Mammary epithelial cell (primary cell): ENCODE measurements at regions of chr7 and their contacts with region 1.

Region 1: GRCh38 chr7:39465055-39465929 is 100.9 kb upstream of the YAE1 start:
- DNase-seq: peak; percentile 39
- H3K4me3 ChIP-seq: no peak overlapping the region
- H3K27ac ChIP-seq: no peak overlapping the region
- H3K4me1 ChIP-seq: no peaks in the 10 kb centered on the region
- H3K27me3 ChIP-seq: peaks cover 3% of the 10 kb centered on the region
- CTCF ChIP-seq: peak; percentile 78 to 82

Region 2: DNA sequence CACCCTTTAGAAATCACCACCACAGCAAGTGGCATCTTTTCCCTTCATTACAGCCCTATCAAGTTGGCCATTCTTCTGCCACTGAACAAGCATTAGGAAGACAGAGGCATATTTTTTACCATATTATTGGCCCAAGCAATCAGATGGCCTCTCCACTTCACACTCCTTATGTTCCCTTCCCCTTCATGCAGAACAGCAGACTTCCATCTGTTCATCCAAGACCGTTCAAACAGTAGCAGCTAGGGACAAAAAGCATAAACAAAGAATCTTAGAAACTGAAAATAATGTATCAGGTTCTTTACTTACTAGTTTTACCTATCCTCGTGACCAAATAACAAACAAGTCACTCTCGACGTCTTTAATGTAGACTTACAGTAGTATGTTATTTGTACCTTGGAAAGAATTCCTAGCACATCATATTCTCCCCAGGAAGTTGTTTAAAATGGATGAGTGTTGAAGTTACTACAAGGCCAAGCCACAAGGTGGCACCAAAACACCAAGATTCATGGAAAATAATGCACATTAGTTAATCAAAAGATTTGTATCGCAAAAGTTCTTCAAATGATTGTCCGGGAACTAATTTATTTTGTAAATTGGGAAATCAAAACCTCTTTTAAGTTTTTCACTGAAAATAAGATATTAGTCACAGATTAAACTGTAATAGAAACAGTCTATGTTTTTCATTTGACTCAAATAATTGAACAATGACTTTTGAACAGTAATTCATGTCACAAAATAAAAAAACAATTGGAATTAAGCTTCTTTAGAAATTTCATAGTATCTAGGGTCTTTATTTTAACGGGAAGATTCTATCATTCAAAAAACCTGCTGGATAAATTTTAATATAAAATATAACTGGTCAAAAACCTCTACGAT is 668.4 kb before region 1 on chr7:
- CTCF ChIA-PET with region 1: no interaction called
- dilution Hi-C with region 1: no loop called
- in situ Hi-C with region 1: loop called (anchors 10 kb)
- intact Hi-C with region 1: loop called (anchors 1 kb)
- DNase-seq: peak; percentile 39
- H3K4me3 ChIP-seq: no peak overlapping the region
- H3K27ac ChIP-seq: no peak overlapping the region
- H3K4me1 ChIP-seq: peaks cover 12% of the 10 kb centered on the region
- H3K27me3 ChIP-seq: no peaks in the 10 kb centered on the region
- CTCF ChIP-seq: peak; percentile 68 to 71

Region 3: DNA sequence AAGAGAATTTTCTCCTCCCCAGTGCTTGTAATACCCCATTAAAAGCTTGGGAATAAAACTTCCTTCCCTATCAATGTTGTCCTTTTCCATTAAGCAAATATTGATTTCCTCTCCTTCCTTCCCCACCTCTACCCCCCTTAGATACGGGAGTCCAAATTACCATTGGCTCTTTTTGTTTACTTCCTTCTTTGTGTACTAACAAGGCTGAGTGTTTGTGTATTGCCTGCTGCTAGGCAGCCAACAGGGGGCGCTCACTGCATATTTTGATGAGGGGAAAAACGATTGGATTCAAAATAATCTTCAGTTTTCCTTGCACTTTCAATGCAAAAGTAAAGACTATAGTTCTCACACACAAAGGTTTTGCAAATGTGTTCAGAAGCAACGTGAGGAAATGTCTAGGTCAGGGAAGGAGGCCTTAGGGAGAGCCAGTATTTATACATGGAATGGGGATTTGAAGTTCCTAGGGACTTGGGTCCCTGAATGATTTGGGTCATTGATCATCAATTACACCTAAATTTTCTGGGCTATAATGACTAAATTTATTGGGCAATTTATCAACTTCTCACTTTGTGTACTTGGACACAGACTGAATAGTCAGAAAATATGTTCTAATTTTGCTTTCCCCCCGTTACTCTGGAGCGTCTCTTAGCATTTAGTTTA is 532.7 kb before region 1 on chr7:
- CTCF ChIA-PET with region 1: no interaction called
- dilution Hi-C with region 1: no loop called
- in situ Hi-C with region 1: loop called in 1 of 2 experiments (anchors 25 kb)
- intact Hi-C with region 1: loop called (anchors 1 kb)
- DNase-seq: peak; percentile 16
- H3K4me3 ChIP-seq: no peak overlapping the region
- H3K27ac ChIP-seq: no peak overlapping the region
- H3K4me1 ChIP-seq: no peaks in the 10 kb centered on the region
- H3K27me3 ChIP-seq: no peaks in the 10 kb centered on the region
- CTCF ChIP-seq: peak; percentile 96 to 97

Region 4: GRCh38 chr7:38942431-38943051 is 522.8 kb before region 1 on chr7:
- CTCF ChIA-PET with region 1: no interaction called
- dilution Hi-C with region 1: no loop called
- in situ Hi-C with region 1: loop called (anchors 10 to 25 kb)
- intact Hi-C with region 1: no loop called
- DNase-seq: no peak
- H3K4me3 ChIP-seq: no peak overlapping the region
- H3K27ac ChIP-seq: no peak overlapping the region
- H3K4me1 ChIP-seq: no peaks in the 10 kb centered on the region
- H3K27me3 ChIP-seq: no peaks in the 10 kb centered on the region
- CTCF ChIP-seq: no peak

Region 5: GRCh38 chr7:39075210-39075609 is 390.1 kb before region 1 on chr7:
- CTCF ChIA-PET with region 1: interaction called, 4 read pairs
- dilution Hi-C with region 1: no loop called
- in situ Hi-C with region 1: no loop called
- intact Hi-C with region 1: loop called (anchors 1 kb)
- DNase-seq: no peak
- H3K4me3 ChIP-seq: no peak overlapping the region
- H3K27ac ChIP-seq: no peak overlapping the region
- H3K4me1 ChIP-seq: no peaks in the 10 kb centered on the region
- H3K27me3 ChIP-seq: no peaks in the 10 kb centered on the region
- CTCF ChIP-seq: peak in 1 of 2 donors; percentile 8

Region 6: DNA sequence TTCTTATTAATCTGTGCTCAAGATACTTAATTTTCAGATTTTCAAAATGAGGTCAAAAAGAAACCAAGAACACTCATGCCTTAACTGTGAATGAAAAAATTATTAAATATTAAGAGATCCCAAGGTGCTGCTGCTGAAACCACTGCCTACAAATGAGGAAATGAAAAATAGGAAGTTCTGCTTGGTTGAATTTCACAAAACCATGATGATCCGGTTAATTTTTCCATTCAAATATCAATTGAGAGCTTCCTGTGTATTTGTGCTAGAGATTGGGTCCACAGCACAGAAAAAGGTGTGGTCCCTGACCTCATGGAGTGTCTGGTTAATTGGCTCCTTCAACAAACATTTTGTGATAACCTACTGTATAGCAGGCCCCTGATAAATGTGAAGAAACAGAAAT is 31.7 kb before region 1 on chr7:
- CTCF ChIA-PET with region 1: no interaction called
- dilution Hi-C with region 1: no loop called
- in situ Hi-C with region 1: no loop called
- intact Hi-C with region 1: no loop called
- DNase-seq: no peak
- H3K4me3 ChIP-seq: no peak overlapping the region
- H3K27ac ChIP-seq: no peak overlapping the region
- H3K4me1 ChIP-seq: peaks cover under 1% of the 10 kb centered on the region
- H3K27me3 ChIP-seq: peaks cover 5% of the 10 kb centered on the region
- CTCF ChIP-seq: no peak

Region 7: DNA sequence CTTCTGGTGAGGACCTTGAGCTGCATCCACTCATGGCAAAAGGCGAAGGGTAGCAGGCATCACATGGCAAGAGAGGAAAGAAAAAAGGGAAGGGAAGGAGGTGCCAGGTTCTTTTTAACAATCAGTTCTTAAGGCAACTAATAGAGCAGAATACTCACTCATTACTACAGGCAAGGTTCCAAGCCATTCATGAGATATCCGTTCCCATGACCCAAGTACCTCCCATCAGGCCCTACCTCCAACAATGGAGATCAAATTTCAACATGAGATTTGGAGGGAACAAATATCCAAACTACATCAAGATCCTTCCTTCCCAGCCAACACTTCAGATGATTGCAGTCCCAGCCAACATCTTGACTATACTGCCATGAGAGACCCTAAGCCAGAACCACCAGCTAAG is 62.0 kb after region 1 on chr7:
- CTCF ChIA-PET with region 1: no interaction called
- dilution Hi-C with region 1: no loop called
- in situ Hi-C with region 1: no loop called
- intact Hi-C with region 1: no loop called
- DNase-seq: no peak
- H3K4me3 ChIP-seq: no peak overlapping the region
- H3K27ac ChIP-seq: no peak overlapping the region
- H3K4me1 ChIP-seq: no peaks in the 10 kb centered on the region
- H3K27me3 ChIP-seq: no peaks in the 10 kb centered on the region
- CTCF ChIP-seq: no peak

Region 8: DNA sequence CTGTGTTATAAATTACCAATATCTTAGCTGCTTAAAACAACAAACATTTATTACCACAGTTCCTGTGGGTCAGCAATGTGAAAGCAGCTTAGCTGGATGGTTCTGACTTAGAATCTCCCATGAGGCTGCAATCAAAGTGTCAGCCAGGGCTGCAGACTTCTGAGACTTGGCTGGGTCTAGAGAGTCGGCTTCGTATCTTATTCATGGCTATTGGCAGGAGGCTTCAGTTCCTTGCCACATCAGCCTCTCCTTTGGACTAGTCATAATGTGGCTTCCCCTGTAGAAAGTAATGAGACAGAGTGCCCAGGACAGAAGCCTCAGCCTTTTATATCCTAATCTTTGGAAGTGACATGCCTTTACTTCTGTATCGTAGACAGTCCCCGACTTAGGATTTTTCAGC is 185.4 kb after region 1 on chr7:
- CTCF ChIA-PET with region 1: no interaction called
- dilution Hi-C with region 1: no loop called
- in situ Hi-C with region 1: no loop called
- intact Hi-C with region 1: no loop called
- DNase-seq: no peak
- H3K4me3 ChIP-seq: no peak overlapping the region
- H3K27ac ChIP-seq: no peak overlapping the region
- H3K4me1 ChIP-seq: no peaks in the 10 kb centered on the region
- H3K27me3 ChIP-seq: no peaks in the 10 kb centered on the region
- CTCF ChIP-seq: no peak